Heart left ventricle (tissue), 16 donors: ENCODE measurements at regions of chr2 and their contacts with region 1.

Region 1: GRCh38 chr2:206981739-206982340 is 42.5 kb downstream of the CPO start:
- DNase-seq: peak; percentile 69 to 80 (median 72)
- ATAC-seq: peak; percentile 87 to 96 (median 93)
- H3K4me3 ChIP-seq: peak overlapping the region in 1 of 12 donors; percentile 13
- H3K27ac ChIP-seq: no peak overlapping the region
- H3K4me1 ChIP-seq: peaks cover 0 to 29% (median 16%) of the 10 kb centered on the region in 12 donors
- H3K27me3 ChIP-seq: no peaks in the 10 kb centered on the region
- CTCF ChIP-seq: peak; percentile 57 to 94 (median 87)
- POLR2A ChIP-seq: no peak

Region 2: DNA sequence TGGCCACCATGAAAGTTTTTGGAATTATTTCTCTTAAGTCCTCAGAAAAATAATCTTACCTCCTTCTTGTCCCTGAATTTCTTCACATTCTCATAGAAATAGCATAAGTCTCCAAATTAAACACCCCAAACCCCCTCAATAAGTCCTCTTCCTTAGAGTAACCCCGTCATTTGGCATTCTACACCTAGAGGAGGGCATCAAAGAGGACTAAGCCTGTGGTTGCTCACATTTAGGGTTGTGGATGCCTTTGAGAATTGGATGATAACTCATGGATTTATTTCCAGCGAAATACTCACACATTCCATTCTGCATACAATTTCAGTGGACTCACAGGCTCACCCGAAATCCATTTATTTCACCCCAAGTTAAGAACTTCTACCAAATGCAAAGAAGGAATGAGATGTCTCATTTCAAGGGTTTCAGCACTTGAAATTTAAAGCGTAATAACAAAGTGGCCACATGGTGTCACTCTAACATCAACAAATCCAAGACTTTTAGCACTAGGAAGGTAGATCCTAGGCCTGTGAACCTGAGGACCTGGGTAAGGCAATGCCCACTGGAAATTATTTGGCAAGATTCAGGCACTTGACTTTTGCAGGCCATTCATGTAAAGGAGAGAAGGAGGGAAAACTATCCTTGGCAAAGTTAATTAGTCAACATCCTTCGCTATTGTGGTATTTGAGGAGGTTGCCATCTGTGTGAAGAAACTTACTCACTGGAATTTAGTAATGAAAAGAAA is 288.3 kb before region 1 on chr2:
- intact Hi-C with region 1: loop called in 1 of 10 experiments (anchors 5 kb)
- DNase-seq: no peak
- ATAC-seq: peak in 3 of 4 donors; percentile 60 to 74 (median 67)
- H3K4me3 ChIP-seq: no peak overlapping the region
- H3K27ac ChIP-seq: no peak overlapping the region
- H3K4me1 ChIP-seq: no peaks in the 10 kb centered on the region
- H3K27me3 ChIP-seq: peaks cover 0 to 5% (median 0%) of the 10 kb centered on the region in 9 donors
- CTCF ChIP-seq: peak; percentile 48 to 78 (median 62)
- POLR2A ChIP-seq: no peak

Region 3: GRCh38 chr2:206800506-206801417 is 181.1 kb before region 1 on chr2:
- intact Hi-C with region 1: loop called in 8 of 10 experiments (anchors 2 to 5 kb)
- DNase-seq: peak in 4 of 5 donors; percentile 58 to 72 (median 64)
- ATAC-seq: peak; percentile 67 to 81 (median 73)
- H3K4me3 ChIP-seq: peak overlapping the region in 4 of 12 donors; percentile 20 to 36 (median 26)
- H3K27ac ChIP-seq: no peak overlapping the region
- H3K4me1 ChIP-seq: peaks cover 0 to 28% (median 9%) of the 10 kb centered on the region in 12 donors
- H3K27me3 ChIP-seq: no peaks in the 10 kb centered on the region
- CTCF ChIP-seq: peak; percentile 56 to 82 (median 74)
- POLR2A ChIP-seq: no peak

Region 4: DNA sequence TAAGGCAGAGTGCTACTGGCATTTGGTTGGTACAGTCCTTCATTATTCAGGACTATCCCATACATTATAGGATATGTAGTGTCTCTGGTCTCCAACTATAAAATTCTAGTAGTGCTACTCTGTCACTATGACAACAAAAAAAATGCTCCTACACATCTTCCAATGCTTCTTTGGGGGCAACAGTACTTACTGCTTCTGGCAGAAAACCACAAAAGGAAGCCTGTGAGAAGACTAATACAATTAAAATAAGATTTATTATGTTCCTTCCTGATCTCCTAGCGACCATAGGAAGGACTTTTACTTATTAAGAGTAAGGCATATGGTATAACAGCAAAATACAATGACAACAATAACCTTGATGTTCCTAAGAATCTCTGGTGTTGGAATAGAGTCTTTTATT is 90.9 kb before region 1 on chr2:
- intact Hi-C with region 1: no loop called
- DNase-seq: no peak
- ATAC-seq: no peak
- H3K4me3 ChIP-seq: no peak overlapping the region
- H3K27ac ChIP-seq: no peak overlapping the region
- H3K4me1 ChIP-seq: no peaks in the 10 kb centered on the region
- H3K27me3 ChIP-seq: no peaks in the 10 kb centered on the region
- CTCF ChIP-seq: no peak
- POLR2A ChIP-seq: no peak

Region 5: DNA sequence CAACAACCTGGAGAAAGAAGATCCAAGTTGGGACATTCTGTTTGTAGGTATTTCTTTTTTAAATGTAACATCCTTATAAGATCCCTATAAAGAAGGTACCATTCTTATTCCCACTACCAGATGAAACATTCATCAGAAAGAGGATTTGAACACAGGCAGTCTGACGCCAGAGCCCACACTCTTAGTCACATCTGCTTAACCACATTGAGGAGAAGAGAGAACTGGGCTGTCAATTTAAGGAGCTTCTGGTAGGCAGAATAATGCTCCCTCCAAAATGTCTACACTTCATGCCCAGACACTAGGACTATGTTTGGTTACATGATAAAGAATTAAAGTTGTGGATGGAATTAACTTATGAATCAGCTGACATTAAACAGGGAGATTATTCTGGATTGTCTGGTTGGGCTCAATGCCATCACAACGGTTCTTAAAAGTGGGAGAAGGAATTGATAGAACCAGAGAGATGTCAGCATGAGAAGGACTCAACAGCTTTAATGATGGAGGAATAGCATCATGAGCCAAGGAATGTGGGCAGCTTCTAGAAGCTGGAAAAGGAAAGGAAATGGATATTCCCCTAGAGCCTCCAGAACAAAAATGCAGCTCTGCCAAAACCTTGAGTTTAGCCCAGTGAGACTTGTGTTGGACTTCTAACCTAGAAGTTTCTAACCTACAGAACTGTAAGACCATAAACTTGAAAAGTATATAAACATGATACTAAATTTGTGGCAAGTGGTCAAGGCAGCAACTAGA is 101.7 kb after region 1 on chr2:
- intact Hi-C with region 1: loop called in 1 of 10 experiments (anchors 10 kb)
- DNase-seq: no peak
- ATAC-seq: peak in 2 of 4 donors; percentile 6 to 27
- H3K4me3 ChIP-seq: no peak overlapping the region
- H3K27ac ChIP-seq: peak overlapping the region in 10 of 12 donors; percentile 19 to 57 (median 44)
- H3K4me1 ChIP-seq: peaks cover 7 to 64% (median 50%) of the 10 kb centered on the region in 12 donors
- H3K27me3 ChIP-seq: no peaks in the 10 kb centered on the region
- CTCF ChIP-seq: no peak
- POLR2A ChIP-seq: no peak

Region 6: GRCh38 chr2:207230261-207231105 is 248.6 kb after region 1 on chr2:
- intact Hi-C with region 1: loop called in 1 of 10 experiments (anchors 2 kb)
- DNase-seq: no peak
- ATAC-seq: peak in 2 of 4 donors; percentile 48 to 54
- H3K4me3 ChIP-seq: no peak overlapping the region
- H3K27ac ChIP-seq: peak overlapping the region in 5 of 12 donors; percentile 3 to 30 (median 27)
- H3K4me1 ChIP-seq: peaks cover 0 to 46% (median 23%) of the 10 kb centered on the region in 12 donors
- H3K27me3 ChIP-seq: no peaks in the 10 kb centered on the region
- CTCF ChIP-seq: peak; percentile 27 to 65 (median 46)
- POLR2A ChIP-seq: no peak

Region 7: DNA sequence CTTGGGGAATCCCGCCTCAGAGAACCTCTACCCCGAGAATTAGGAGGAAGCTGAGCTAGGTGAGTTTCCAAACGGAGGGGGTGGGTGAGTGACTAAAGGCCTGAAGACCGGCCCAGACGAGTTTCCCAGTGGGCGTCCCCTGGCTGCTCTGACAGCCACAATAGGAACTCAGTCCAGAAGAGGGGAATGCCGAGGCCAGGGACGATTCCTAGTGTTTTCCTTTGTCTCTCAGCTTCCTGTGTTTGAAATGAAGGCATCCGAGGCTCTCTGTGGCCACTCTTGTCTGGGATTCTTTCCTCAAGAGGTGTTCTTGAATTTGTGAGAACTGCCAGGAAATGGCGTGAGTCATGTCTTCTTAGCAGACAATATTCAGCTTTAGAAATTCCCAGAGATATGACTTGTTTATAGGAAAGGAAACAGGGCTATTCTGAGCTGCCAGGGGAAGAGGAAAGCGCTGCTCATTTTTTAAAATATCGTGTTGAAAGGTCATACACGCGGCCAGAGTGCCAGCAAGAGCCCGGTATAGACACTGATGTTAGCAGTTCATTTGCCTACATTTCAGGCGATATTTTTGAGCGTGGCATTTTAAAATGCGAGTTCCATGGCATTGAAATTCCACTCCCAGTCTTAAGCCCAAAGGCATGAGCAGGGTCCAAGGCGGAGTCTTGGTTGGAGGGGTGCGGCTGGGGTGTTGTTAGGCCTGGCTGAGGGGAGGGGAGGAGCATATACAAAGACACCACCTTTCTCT is 353.0 kb after region 1 on chr2:
- intact Hi-C with region 1: loop called in 4 of 10 experiments (anchors 10 kb)
- DNase-seq: peak; percentile 66 to 87 (median 77)
- ATAC-seq: peak; percentile 61 to 86 (median 84)
- H3K4me3 ChIP-seq: peak overlapping the region in 10 of 12 donors; percentile 12 to 45 (median 36)
- H3K27ac ChIP-seq: peak overlapping the region; percentile 73 to 96 (median 90)
- H3K4me1 ChIP-seq: peaks cover 2 to 82% (median 37%) of the 10 kb centered on the region in 12 donors
- H3K27me3 ChIP-seq: no peaks in the 10 kb centered on the region
- CTCF ChIP-seq: peak in 1 of 12 donors; percentile 10
- POLR2A ChIP-seq: peak in 1 of 2 donors; percentile 32

Region 8: GRCh38 chr2:207352978-207353671 is 371.3 kb after region 1 on chr2:
- intact Hi-C with region 1: loop called in 1 of 10 experiments (anchors 10 kb)
- DNase-seq: no peak
- ATAC-seq: peak; percentile 20 to 77 (median 52)
- H3K4me3 ChIP-seq: no peak overlapping the region
- H3K27ac ChIP-seq: no peak overlapping the region
- H3K4me1 ChIP-seq: peaks cover 0 to 6% (median 0%) of the 10 kb centered on the region in 12 donors
- H3K27me3 ChIP-seq: no peaks in the 10 kb centered on the region
- CTCF ChIP-seq: peak in 6 of 12 donors; percentile 8 to 32 (median 16)
- POLR2A ChIP-seq: no peak